Heart right ventricle (tissue), 16 donors: ENCODE measurements at regions of chr5 and their contacts with region 1.

Region 1: DNA sequence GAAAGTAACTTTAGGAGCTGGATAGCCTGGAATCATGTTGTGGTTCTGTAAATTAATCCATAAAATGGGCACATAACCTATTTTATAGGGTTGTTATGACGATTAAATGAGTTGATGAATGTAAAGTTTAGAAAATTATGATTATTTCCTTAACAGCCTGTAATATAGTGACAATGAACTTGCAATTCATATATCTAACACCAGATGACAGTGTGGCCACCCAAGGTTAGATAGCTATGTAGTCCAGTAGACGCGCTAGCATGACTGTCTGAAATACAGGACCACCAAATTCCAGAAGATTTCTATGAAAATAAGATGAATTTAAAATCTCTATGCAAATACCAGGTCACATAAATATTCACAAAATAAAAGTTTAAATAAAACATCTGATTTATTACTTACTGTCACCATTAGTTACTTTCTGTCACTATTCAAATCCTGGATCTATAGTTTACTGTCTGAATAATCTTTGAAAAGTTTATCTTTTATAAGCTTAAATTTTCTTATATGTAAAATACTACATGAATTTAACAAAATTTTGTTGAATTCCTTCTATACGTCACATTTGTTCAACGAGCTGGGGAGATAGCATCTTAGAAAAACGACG is 26.1 kb upstream of the MACIR start:
- DNase-seq: peak in 1 of 2 donors; percentile 12
- ATAC-seq: peak in 7 of 8 donors; percentile 58 to 78 (median 67)
- H3K4me3 ChIP-seq: no peak overlapping the region
- H3K27ac ChIP-seq: no peak overlapping the region
- H3K4me1 ChIP-seq: no peaks in the 10 kb centered on the region
- H3K27me3 ChIP-seq: no peaks in the 10 kb centered on the region
- CTCF ChIP-seq: peak; percentile 72 to 94 (median 85)

Region 2: DNA sequence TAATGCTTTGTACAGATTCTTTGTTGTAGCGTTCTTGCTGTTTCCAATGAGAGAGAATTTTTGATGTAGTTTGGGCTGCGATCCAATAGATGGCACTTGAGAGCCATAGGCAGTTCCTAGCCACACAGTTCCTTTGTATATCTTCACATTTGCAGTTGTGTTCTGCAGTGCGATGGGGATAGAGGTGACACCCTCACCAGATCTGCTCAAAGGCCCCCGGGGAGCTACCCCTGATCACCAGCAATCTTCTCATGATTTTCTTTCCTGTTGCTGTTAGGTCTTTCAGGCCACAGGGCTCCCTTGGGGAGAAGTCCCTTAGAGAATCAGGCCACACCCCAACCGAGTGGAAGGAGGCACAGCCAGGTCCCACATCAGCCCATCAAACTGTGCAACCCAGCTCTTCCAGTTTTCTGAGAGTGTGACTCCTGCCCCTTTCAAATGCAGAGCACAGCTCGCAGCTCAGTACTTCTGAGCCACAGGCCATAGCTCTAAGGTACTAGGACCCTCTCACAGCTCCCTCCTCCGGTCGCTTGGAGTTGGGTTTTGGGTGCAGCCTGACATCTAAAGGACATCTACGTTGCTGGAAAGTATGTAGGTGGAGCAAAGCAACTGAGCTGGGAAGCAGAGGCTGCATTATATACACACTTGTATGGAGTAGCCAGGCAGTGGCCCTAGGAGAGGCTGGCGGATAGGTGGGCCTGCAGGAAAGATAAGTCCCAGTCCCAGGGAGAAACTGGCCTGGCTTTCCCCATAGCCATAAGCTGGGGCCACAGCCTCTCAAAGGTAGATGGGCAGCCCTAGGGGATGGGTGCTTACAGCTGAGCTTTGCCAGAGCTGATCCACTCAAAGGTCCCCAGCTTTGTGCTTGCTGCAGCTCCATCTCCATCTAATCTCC is 1289.9 kb before region 1 on chr5:
- intact Hi-C with region 1: no loop called
- DNase-seq: no peak
- ATAC-seq: no peak
- H3K4me3 ChIP-seq: no peak overlapping the region
- H3K27ac ChIP-seq: no peak overlapping the region
- H3K4me1 ChIP-seq: no peaks in the 10 kb centered on the region
- H3K27me3 ChIP-seq: no peaks in the 10 kb centered on the region
- CTCF ChIP-seq: peak in 5 of 9 donors; percentile 21 to 50 (median 34)

Region 3: DNA sequence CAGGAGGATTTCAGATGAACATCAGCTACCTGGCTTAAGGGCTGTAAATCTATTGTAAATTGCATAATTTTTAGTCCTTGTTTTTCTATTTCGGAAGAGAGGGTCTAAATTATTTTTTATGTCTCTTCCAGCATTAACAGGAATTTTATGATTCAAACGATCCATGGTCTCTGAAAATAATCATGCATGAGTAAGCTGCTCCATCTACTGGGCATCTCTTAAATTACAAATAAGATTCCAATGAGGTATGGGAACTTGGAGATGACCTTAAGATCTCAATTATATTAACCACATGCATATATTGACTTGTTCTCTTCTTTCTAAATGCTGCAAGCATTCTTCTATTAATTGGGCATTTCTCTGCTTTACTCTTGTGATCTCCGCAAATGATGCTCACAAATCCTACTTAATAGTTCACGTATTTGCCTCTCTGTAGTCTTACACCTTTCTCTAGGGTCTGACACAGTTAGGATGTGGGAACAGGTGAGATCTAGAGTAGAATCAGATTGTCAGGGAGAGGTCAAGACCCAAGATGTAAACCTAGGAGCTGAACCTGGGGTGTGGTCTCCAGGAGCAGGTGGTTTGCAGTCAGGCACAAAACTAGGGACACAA is 243.2 kb after region 1 on chr5:
- intact Hi-C with region 1: loop called (anchors 1 to 5 kb)
- DNase-seq: no peak
- ATAC-seq: peak in 4 of 8 donors; percentile 35 to 58 (median 44)
- H3K4me3 ChIP-seq: no peak overlapping the region
- H3K27ac ChIP-seq: no peak overlapping the region
- H3K4me1 ChIP-seq: no peaks in the 10 kb centered on the region
- H3K27me3 ChIP-seq: no peaks in the 10 kb centered on the region
- CTCF ChIP-seq: peak; percentile 42 to 85 (median 74)